H1 (cell line): ENCODE measurements at regions of chr11 and their contacts with region 1.

Region 1: GRCh38 chr11:14249121-14249963 is 109.6 kb downstream of the RRAS2 start:
- DNase-seq: peak in 1 of 2 experiments; percentile 80
- H3K4me3 ChIP-seq: no peak overlapping the region
- H3K27ac ChIP-seq: no peak overlapping the region
- H3K4me1 ChIP-seq: peaks cover 0 to 6% (median 5%) of the 10 kb centered on the region in 4 experiments; a peak in 4 of 7 replicates
- H3K27me3 ChIP-seq: no peaks in the 10 kb centered on the region
- CTCF ChIP-seq: peak; percentile 42 to 91 (median 88)
- EP300 ChIP-seq: no peak
- POLR2A ChIP-seq: no peak
- RAD21 ChIP-seq: peak; percentile 99 to 100

Region 2: GRCh38 chr11:13962562-13963168 is 286.7 kb before region 1 on chr11 and contains the start of gene SPON1:
- CTCF ChIA-PET with region 1: interaction called, 43 read pairs
- POLR2A ChIA-PET with region 1: no interaction called
- DNase-seq: peak in 1 of 2 experiments; percentile 77
- H3K4me3 ChIP-seq: peak within 1 kb of the TSS; percentile 43 to 66 (median 60)
- H3K27ac ChIP-seq: no peak within 1 kb of the TSS
- H3K4me1 ChIP-seq: peaks cover 5 to 31% (median 18%) of the 10 kb centered on the region in 4 experiments
- H3K27me3 ChIP-seq: peaks cover 37 to 70% (median 56%) of the 10 kb centered on the region in 4 experiments
- CTCF ChIP-seq: no peak
- EP300 ChIP-seq: no peak
- POLR2A ChIP-seq: no peak
- RAD21 ChIP-seq: peak in 1 of 2 experiments; percentile 0; a peak in 1 of 4 replicates
- total RNA-seq, gene SPON1: 4.3 and 5.4 TPM in 2 replicates

Region 3: GRCh38 chr11:13970986-13971385 is 278.4 kb before region 1 on chr11:
- CTCF ChIA-PET with region 1: interaction called, 11 read pairs
- POLR2A ChIA-PET with region 1: no interaction called
- DNase-seq: peak in 1 of 2 experiments; percentile 53
- H3K4me3 ChIP-seq: no peak overlapping the region
- H3K27ac ChIP-seq: no peak overlapping the region
- H3K4me1 ChIP-seq: peaks cover 3 to 7% (median 5%) of the 10 kb centered on the region in 4 experiments; a peak in 5 of 7 replicates
- H3K27me3 ChIP-seq: peaks cover 0 to 6% (median 0%) of the 10 kb centered on the region in 4 experiments; a peak in 2 of 7 replicates
- CTCF ChIP-seq: peak; percentile 68 to 73 (median 73)
- EP300 ChIP-seq: no peak
- POLR2A ChIP-seq: no peak
- RAD21 ChIP-seq: peak; percentile 73 to 75

Region 4: GRCh38 chr11:14519917-14520746 is 270.8 kb after region 1 on chr11 and contains the start of gene PSMA1:
- CTCF ChIA-PET with region 1: no interaction called
- POLR2A ChIA-PET with region 1: no interaction called
- DNase-seq: peak; percentile 91
- H3K4me3 ChIP-seq: peak within 1 kb of the TSS; percentile 90 to 100 (median 100)
- H3K27ac ChIP-seq: peak within 1 kb of the TSS; percentile 74
- H3K4me1 ChIP-seq: peaks cover 0 to 2% (median 0%) of the 10 kb centered on the region in 4 experiments; a peak in 2 of 7 replicates
- H3K27me3 ChIP-seq: no peaks in the 10 kb centered on the region
- CTCF ChIP-seq: no peak
- EP300 ChIP-seq: peak in 1 of 2 experiments; percentile 96; a peak in 2 of 3 replicates
- POLR2A ChIP-seq: peak; percentile 46 to 88
- RAD21 ChIP-seq: peak; percentile 18 to 23; a peak in 3 of 4 replicates
- total RNA-seq, gene PSMA1: 148 and 150 TPM in 2 replicates